Activated B cell treated with CpG ODN at 0.5 μM for 24 hours (primary cell): ENCODE measurements at regions of chr9 and their contacts with region 1.

Region 1: GRCh38 chr9:112793213-112793810 is 42.8 kb downstream of the SNX30 start:
- DNase-seq: peak; percentile 72
- ATAC-seq: peak; percentile 99
- H3K4me3 Mint-ChIP-seq: no peak overlapping the region
- H3K27ac Mint-ChIP-seq: no peak overlapping the region
- H3K4me1 Mint-ChIP-seq: peaks cover 24% of the 10 kb centered on the region
- H3K27me3 Mint-ChIP-seq: no peaks in the 10 kb centered on the region
- CTCF ChIP-seq: no peak

Region 2: GRCh38 chr9:111597817-111598729 is 1195.2 kb before region 1 on chr9:
- CTCF ChIA-PET with region 1: interaction called, 3 read pairs
- POLR2A ChIA-PET with region 1: no interaction called
- intact Hi-C with region 1: loop called (anchors 5 kb)
- DNase-seq: peak; percentile 27
- ATAC-seq: peak; percentile 61
- H3K4me3 Mint-ChIP-seq: peak overlapping the region; percentile 83
- H3K27ac Mint-ChIP-seq: no peak overlapping the region
- H3K4me1 Mint-ChIP-seq: peaks cover 22% of the 10 kb centered on the region
- H3K27me3 Mint-ChIP-seq: peaks cover 29% of the 10 kb centered on the region
- CTCF ChIP-seq: no peak

Region 3: DNA sequence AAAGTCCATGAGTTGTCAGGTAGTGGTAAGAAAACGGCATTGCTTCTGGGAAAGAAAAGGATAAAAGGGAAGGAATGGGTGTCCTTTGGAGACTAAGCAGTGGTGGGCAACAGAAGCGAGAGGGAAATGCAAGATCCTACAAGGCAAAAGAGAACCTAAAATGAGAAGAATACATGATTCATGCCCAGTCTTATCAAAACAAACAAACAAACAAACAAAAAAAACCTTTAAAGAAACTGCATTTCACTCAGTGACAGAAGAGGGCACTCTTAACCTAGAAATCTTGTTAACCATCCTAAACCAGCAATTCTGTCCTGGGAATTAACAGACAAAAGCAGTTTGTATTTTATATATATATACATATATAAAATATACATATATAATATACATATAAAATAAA is 706.7 kb before region 1 on chr9:
- CTCF ChIA-PET with region 1: interaction called, 10 read pairs
- POLR2A ChIA-PET with region 1: no interaction called
- intact Hi-C with region 1: no loop called
- DNase-seq: no peak
- ATAC-seq: no peak
- H3K4me3 Mint-ChIP-seq: no peak overlapping the region
- H3K27ac Mint-ChIP-seq: no peak overlapping the region
- H3K4me1 Mint-ChIP-seq: peaks cover 4% of the 10 kb centered on the region
- H3K27me3 Mint-ChIP-seq: no peaks in the 10 kb centered on the region
- CTCF ChIP-seq: no peak

Region 4: DNA sequence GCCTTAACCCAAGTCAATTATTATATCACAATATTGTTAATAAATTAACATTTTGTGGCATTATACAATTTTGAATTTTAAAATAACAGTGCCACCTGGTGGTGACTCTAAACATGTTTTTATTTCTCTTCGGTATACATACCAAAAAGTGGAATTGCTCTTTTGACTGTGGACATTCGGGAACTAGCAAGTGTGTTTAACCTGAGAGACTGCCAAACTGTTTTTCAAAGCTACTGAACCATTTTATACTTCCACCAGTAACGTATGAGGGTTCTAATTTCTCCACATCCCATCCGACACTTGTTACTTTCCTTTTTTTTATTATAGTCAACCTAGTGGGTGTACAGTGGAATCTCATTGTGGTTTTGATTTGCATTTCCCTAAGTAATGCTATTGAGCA is 431.7 kb before region 1 on chr9:
- CTCF ChIA-PET with region 1: interaction called, 10 read pairs
- POLR2A ChIA-PET with region 1: no interaction called
- intact Hi-C with region 1: loop called (anchors 1 kb)
- DNase-seq: no peak
- ATAC-seq: peak; percentile 40
- H3K4me3 Mint-ChIP-seq: peak overlapping the region; percentile 41
- H3K27ac Mint-ChIP-seq: no peak overlapping the region
- H3K4me1 Mint-ChIP-seq: peaks cover 2% of the 10 kb centered on the region
- H3K27me3 Mint-ChIP-seq: no peaks in the 10 kb centered on the region
- CTCF ChIP-seq: peak; percentile 59

Region 5: GRCh38 chr9:112443200-112443599 is 350.1 kb before region 1 on chr9:
- CTCF ChIA-PET with region 1: interaction called, 24 read pairs
- POLR2A ChIA-PET with region 1: no interaction called
- intact Hi-C with region 1: loop called (anchors 1 kb)
- DNase-seq: no peak
- ATAC-seq: no peak
- H3K4me3 Mint-ChIP-seq: no peak overlapping the region
- H3K27ac Mint-ChIP-seq: no peak overlapping the region
- H3K4me1 Mint-ChIP-seq: peaks cover 30% of the 10 kb centered on the region
- H3K27me3 Mint-ChIP-seq: no peaks in the 10 kb centered on the region
- CTCF ChIP-seq: no peak

Region 6: DNA sequence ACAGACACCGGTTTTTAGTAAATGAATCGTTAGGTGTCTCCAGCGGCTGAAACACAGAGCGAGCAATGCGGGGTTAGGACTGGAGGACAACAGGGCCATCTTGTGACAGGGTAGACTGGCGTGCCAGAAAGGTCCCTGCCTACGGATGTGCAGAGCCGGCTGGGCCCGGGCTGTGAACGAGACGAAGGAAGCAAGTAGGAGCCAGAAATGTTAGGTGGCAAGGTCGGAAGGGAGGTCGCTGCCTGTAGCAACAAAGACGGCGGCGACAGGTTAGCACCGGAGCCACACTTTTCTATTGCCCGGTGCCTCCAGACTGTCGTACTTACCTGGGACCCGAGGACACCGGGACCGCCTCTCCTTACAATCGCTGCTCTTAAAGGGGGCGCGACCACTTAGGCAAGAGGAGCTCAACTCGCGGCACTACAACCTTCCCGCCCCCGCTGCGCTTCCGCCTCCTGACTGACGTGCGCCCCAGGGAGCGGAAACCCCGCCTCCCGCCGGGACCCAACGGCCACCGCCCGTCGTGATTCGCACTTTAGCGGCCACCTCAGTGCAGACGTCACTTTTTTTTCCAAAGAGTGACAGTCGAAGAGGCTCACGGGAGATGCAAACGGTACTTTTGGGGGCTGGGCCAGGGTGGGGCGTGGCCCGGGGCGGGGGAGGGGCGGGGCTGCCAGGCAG is 75.5 kb before region 1 on chr9 and contains the start of gene INIP:
- CTCF ChIA-PET with region 1: interaction called, 9 read pairs
- POLR2A ChIA-PET with region 1: interaction called, 6 read pairs
- intact Hi-C with region 1: loop called (anchors 1 kb)
- DNase-seq: peak; percentile 95
- ATAC-seq: peak; percentile 93
- H3K4me3 Mint-ChIP-seq: peak within 1 kb of the TSS; percentile 100
- H3K27ac Mint-ChIP-seq: peak within 1 kb of the TSS; percentile 98
- H3K4me1 Mint-ChIP-seq: peaks cover 19% of the 10 kb centered on the region
- H3K27me3 Mint-ChIP-seq: no peaks in the 10 kb centered on the region
- CTCF ChIP-seq: no peak
- total RNA-seq, gene INIP: 31.1 and 32.1 TPM in 2 replicates

Region 7: GRCh38 chr9:112809351-112809848 is 16.1 kb after region 1 on chr9:
- CTCF ChIA-PET with region 1: no interaction called
- POLR2A ChIA-PET with region 1: no interaction called
- intact Hi-C with region 1: no loop called
- DNase-seq: no peak
- ATAC-seq: peak; percentile 93
- H3K4me3 Mint-ChIP-seq: no peak overlapping the region
- H3K27ac Mint-ChIP-seq: no peak overlapping the region
- H3K4me1 Mint-ChIP-seq: peaks cover 23% of the 10 kb centered on the region
- H3K27me3 Mint-ChIP-seq: peaks cover 10% of the 10 kb centered on the region
- CTCF ChIP-seq: no peak

Region 8: GRCh38 chr9:112819635-112820496 is 26.6 kb after region 1 on chr9:
- CTCF ChIA-PET with region 1: interaction called, 22 read pairs
- POLR2A ChIA-PET with region 1: no interaction called
- intact Hi-C with region 1: loop called (anchors 1 kb)
- DNase-seq: no peak
- ATAC-seq: peak; percentile 69
- H3K4me3 Mint-ChIP-seq: no peak overlapping the region
- H3K27ac Mint-ChIP-seq: peak overlapping the region; percentile 7
- H3K4me1 Mint-ChIP-seq: peaks cover 23% of the 10 kb centered on the region
- H3K27me3 Mint-ChIP-seq: no peaks in the 10 kb centered on the region
- CTCF ChIP-seq: peak; percentile 83